Caco-2 (cell line): ENCODE measurements at regions of chr7 and their contacts with region 1.

Region 1: GRCh38 chr7:27346531-27347270 is 104.1 kb downstream of the EVX1 start:
- DNase-seq: peak; percentile 90 to 94
- H3K4me3 ChIP-seq: peak overlapping the region; percentile 28
- H3K4me3 Mint-ChIP-seq: peak overlapping the region; percentile 68
- H3K27ac Mint-ChIP-seq: peak overlapping the region; percentile 92
- H3K4me1 ChIP-seq: peaks cover 53% of the 10 kb centered on the region
- H3K4me1 Mint-ChIP-seq: peaks cover 64% of the 10 kb centered on the region
- H3K27me3 ChIP-seq: no peaks in the 10 kb centered on the region
- H3K27me3 Mint-ChIP-seq: no peaks in the 10 kb centered on the region
- CTCF ChIP-seq: no peak

Region 2: DNA sequence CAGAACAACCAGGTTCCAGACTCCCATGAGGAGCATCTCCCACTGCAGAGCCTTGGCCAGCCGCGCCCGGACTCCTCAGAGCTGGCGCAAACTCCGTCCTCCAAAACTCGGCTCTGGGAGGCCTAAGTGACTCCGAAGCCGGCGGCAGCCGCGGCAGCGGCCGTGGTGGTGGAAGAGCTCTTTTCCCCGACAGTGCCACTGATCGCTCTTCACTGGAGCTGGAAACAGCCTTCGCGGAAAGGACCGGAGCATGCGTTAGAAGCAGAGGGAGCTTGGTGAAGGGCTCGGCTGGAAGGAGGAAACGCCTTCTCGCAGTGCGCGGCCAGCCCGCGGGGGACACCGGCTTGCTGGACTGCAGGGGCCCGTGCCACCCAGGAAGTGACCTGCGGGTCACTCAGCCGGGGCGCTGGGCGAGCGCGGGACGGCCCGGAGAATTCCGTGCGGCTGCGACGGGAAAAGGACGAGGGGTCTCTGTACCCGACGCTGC is 141.8 kb before region 1 on chr7:
- CTCF ChIA-PET with region 1: no interaction called
- POLR2A ChIA-PET with region 1: no interaction called
- intact Hi-C with region 1: no loop called
- DNase-seq: no peak
- H3K4me3 ChIP-seq: peak overlapping the region; percentile 17
- H3K4me3 Mint-ChIP-seq: peak overlapping the region; percentile 48
- H3K27ac Mint-ChIP-seq: no peak overlapping the region
- H3K4me1 ChIP-seq: peaks cover 5% of the 10 kb centered on the region
- H3K4me1 Mint-ChIP-seq: peaks cover 6% of the 10 kb centered on the region
- H3K27me3 ChIP-seq: no peaks in the 10 kb centered on the region; the same call in 1 of the 2 replicates
- H3K27me3 Mint-ChIP-seq: peaks cover 5% of the 10 kb centered on the region
- CTCF ChIP-seq: no peak

Region 3: GRCh38 chr7:27235387-27236311 is 111.1 kb before region 1 on chr7:
- CTCF ChIA-PET with region 1: no interaction called
- POLR2A ChIA-PET with region 1: no interaction called
- intact Hi-C with region 1: loop called (anchors 10 kb)
- DNase-seq: peak; percentile 81 to 86
- H3K4me3 ChIP-seq: peak overlapping the region; percentile 70
- H3K4me3 Mint-ChIP-seq: peak overlapping the region; percentile 77
- H3K27ac Mint-ChIP-seq: peak overlapping the region; percentile 32
- H3K4me1 ChIP-seq: no peaks in the 10 kb centered on the region; the same call in 1 of the 2 replicates
- H3K4me1 Mint-ChIP-seq: no peaks in the 10 kb centered on the region
- H3K27me3 ChIP-seq: no peaks in the 10 kb centered on the region
- H3K27me3 Mint-ChIP-seq: no peaks in the 10 kb centered on the region
- CTCF ChIP-seq: peak; percentile 69 to 79

Region 4: GRCh38 chr7:27262121-27262520 is 84.6 kb before region 1 on chr7:
- CTCF ChIA-PET with region 1: no interaction called
- POLR2A ChIA-PET with region 1: no interaction called
- intact Hi-C with region 1: loop called (anchors 5 kb)
- DNase-seq: no peak
- H3K4me3 ChIP-seq: no peak overlapping the region
- H3K4me3 Mint-ChIP-seq: no peak overlapping the region
- H3K27ac Mint-ChIP-seq: no peak overlapping the region
- H3K4me1 ChIP-seq: peaks cover 50% of the 10 kb centered on the region
- H3K4me1 Mint-ChIP-seq: peaks cover 49% of the 10 kb centered on the region
- H3K27me3 ChIP-seq: no peaks in the 10 kb centered on the region
- H3K27me3 Mint-ChIP-seq: no peaks in the 10 kb centered on the region
- CTCF ChIP-seq: no peak

Region 5: GRCh38 chr7:27364344-27365100 is 17.8 kb after region 1 on chr7:
- CTCF ChIA-PET with region 1: interaction called, 3 read pairs
- POLR2A ChIA-PET with region 1: no interaction called
- intact Hi-C with region 1: loop called (anchors 2 kb)
- DNase-seq: no peak
- H3K4me3 ChIP-seq: no peak overlapping the region
- H3K4me3 Mint-ChIP-seq: no peak overlapping the region
- H3K27ac Mint-ChIP-seq: no peak overlapping the region
- H3K4me1 ChIP-seq: peaks cover 45% of the 10 kb centered on the region
- H3K4me1 Mint-ChIP-seq: peaks cover 20% of the 10 kb centered on the region
- H3K27me3 ChIP-seq: no peaks in the 10 kb centered on the region
- H3K27me3 Mint-ChIP-seq: no peaks in the 10 kb centered on the region
- CTCF ChIP-seq: no peak

Region 6: DNA sequence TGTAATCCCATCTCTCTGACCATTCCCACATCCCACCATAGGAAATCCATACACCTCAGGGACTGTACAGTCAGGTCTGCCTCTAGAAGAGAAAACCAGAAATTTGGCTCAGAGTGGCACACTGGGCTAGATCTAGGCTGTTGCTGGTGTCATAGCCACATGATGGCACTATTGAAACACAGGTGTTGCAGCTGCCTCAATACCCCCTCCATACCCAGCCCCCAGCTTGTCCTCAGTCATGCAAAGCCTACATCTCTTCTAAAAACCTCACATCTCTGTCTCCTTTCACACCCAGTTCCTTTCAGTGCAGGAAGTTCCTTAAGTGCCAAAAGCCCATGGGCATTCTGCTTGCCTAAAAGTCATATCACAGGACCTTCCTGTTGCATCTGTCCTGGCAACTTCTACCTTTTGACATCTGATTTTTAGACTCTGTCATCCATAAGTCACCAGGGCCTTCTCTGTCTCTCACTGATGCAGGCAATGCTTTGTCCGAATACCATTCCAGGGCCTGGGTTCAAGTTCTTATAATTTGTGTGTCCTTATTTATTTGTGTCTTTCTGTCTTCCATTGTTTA is 343.0 kb after region 1 on chr7:
- CTCF ChIA-PET with region 1: no interaction called
- POLR2A ChIA-PET with region 1: no interaction called
- intact Hi-C with region 1: no loop called
- DNase-seq: peak; percentile 42 to 43
- H3K4me3 ChIP-seq: no peak overlapping the region
- H3K4me3 Mint-ChIP-seq: no peak overlapping the region
- H3K27ac Mint-ChIP-seq: no peak overlapping the region
- H3K4me1 ChIP-seq: no peaks in the 10 kb centered on the region
- H3K4me1 Mint-ChIP-seq: no peaks in the 10 kb centered on the region
- H3K27me3 ChIP-seq: no peaks in the 10 kb centered on the region; the same call in 1 of the 2 replicates
- H3K27me3 Mint-ChIP-seq: no peaks in the 10 kb centered on the region
- CTCF ChIP-seq: peak; percentile 19 to 60